Naive thymus-derived CD4-positive, alpha-beta T cell (primary cell): ENCODE measurements at regions of chr4 and their contacts with region 1.

Region 1: DNA sequence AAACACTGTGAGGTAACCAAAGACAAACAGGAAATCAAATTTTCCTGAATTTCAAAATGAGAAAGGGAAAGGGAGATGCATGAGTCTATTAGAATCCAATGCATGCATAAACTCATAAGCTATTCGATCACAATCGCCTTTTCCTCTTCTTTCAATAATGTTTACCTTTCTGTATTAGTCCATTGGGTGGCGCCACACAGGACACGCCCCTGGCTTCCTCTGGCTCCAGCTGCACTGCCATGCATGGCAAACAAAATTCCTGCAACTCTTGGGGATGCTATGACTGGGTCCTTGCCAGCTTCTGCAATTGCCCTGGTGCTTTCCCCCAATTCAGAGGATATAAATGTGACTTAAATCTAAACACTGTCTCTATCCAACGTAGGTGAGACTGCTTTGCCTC is 424.5 kb upstream of the PCDH7 start:
- DNase-seq: no peak
- ATAC-seq: no peak
- H3K4me3 ChIP-seq: no peak overlapping the region
- H3K4me3 Mint-ChIP-seq: no peak overlapping the region
- H3K27ac ChIP-seq: no peak overlapping the region
- H3K27ac Mint-ChIP-seq: no peak overlapping the region
- H3K4me1 ChIP-seq: no peaks in the 10 kb centered on the region
- H3K4me1 Mint-ChIP-seq: no peaks in the 10 kb centered on the region
- H3K27me3 ChIP-seq: no peaks in the 10 kb centered on the region
- H3K27me3 Mint-ChIP-seq: no peaks in the 10 kb centered on the region

Region 2: DNA sequence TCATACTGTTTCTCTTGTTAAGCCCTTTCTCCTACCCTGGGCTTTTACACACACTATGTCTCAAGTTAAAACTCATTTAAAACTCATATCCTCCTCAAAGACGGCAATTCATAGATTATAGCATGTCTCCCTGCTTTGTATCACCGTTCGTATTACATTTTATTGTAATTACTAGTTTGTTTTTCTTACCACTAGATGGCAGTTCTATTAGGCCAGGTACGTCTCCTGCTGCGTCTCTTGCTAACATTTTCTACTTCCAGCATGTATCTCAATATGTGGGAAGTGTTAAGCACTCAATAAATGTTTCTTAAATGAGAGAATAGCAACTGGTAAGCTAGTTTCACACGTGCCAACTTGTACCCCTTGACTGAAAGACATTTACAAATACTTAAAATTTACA is 25.8 kb before region 1 on chr4:
- CTCF ChIA-PET with region 1: no interaction called
- POLR2A ChIA-PET with region 1: no interaction called
- intact Hi-C with region 1: loop called in 1 of 2 experiments (anchors 1 kb)
- DNase-seq: no peak
- ATAC-seq: no peak
- H3K4me3 ChIP-seq: no peak overlapping the region
- H3K4me3 Mint-ChIP-seq: no peak overlapping the region
- H3K27ac ChIP-seq: no peak overlapping the region
- H3K27ac Mint-ChIP-seq: no peak overlapping the region
- H3K4me1 ChIP-seq: no peaks in the 10 kb centered on the region
- H3K4me1 Mint-ChIP-seq: no peaks in the 10 kb centered on the region
- H3K27me3 ChIP-seq: no peaks in the 10 kb centered on the region
- H3K27me3 Mint-ChIP-seq: no peaks in the 10 kb centered on the region

Region 3: DNA sequence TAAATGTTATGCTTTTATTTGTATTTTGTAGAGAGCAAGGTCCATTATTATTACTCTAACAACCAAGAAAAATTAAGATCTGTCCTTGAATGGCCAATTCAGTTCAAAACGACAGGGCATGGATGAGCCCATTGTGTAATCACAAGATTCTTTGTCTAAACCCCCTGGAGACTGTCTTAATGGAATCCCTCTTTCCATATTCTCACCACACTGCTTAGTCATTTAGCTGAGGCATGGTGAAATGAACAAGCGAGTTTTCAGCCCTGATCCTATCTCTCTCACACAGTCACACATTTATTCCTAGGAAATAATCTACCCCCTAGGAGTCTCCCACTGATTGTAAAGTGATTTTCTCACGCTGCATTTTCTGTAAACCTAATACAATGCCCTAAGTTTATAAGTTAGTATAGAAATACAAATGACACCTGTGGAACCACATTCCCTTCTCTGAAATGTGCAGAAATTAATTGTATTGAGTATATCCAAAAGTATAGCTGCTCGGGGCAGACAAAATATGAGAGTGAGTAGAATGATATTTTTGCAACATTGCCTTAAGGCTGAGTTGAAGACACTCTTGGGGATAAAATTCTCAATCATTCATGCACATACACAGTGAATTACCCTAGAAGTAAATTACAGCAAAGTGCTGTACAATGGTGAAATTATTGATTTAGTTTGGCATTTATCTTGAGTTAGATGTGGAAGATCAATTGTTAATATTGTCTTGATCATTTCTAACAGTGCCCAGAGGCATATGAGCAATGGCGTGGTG is 304.8 kb after region 1 on chr4:
- CTCF ChIA-PET with region 1: no interaction called
- POLR2A ChIA-PET with region 1: no interaction called
- intact Hi-C with region 1: no loop called
- DNase-seq: no peak
- ATAC-seq: no peak
- H3K4me3 ChIP-seq: no peak overlapping the region
- H3K4me3 Mint-ChIP-seq: no peak overlapping the region
- H3K27ac ChIP-seq: no peak overlapping the region
- H3K27ac Mint-ChIP-seq: no peak overlapping the region
- H3K4me1 ChIP-seq: no peaks in the 10 kb centered on the region
- H3K4me1 Mint-ChIP-seq: no peaks in the 10 kb centered on the region
- H3K27me3 ChIP-seq: no peaks in the 10 kb centered on the region
- H3K27me3 Mint-ChIP-seq: no peaks in the 10 kb centered on the region

Region 4: DNA sequence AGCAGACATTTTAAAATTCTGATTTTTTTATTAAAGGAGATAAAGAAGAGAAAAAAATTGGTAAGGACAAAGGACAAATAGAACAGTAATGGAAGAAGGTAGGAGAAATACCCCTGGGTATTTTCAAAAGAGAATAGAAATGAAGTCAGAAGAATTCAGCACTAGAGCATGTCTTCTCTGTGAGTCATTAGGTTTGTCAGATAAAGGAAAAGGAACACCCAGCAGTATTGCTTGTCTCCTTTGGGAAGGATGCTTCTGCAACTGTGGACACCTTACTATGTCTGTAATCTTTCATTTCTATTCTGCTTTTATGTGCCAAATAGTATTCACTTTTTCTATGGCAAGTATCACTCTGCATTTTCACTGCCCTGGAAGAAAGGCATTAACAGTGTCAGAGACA is 400.5 kb after region 1 on chr4:
- CTCF ChIA-PET with region 1: no interaction called
- POLR2A ChIA-PET with region 1: no interaction called
- intact Hi-C with region 1: no loop called
- DNase-seq: no peak
- ATAC-seq: no peak
- H3K4me3 ChIP-seq: no peak overlapping the region
- H3K4me3 Mint-ChIP-seq: no peak overlapping the region
- H3K27ac ChIP-seq: no peak overlapping the region
- H3K27ac Mint-ChIP-seq: no peak overlapping the region
- H3K4me1 ChIP-seq: no peaks in the 10 kb centered on the region
- H3K4me1 Mint-ChIP-seq: no peaks in the 10 kb centered on the region
- H3K27me3 ChIP-seq: no peaks in the 10 kb centered on the region
- H3K27me3 Mint-ChIP-seq: no peaks in the 10 kb centered on the region